A673 (cell line): ENCODE measurements at regions of chr1 and their contacts with region 1.

Region 1: DNA sequence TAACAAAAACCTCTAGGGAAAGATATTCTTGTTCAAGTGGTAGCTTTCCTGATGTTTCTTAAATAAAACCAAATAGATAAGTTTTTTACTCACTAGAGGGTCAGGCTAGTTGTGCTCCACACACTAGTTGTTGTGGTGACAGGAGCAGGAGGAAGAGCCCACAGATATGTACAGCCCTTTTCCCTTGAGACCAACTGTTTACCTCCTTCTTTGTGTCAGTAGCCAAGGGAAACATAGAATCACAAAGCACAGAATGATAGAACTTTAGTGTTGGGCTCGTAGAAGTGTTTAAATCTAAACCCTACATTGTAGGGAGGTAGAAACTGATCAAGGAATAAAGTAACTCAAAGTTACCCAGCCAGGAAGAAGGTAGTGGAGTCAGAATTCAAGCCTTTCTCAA is 309.0 kb downstream of the CTH start:
- DNase-seq: peak; percentile 97
- H3K4me3 ChIP-seq: peak overlapping the region; percentile 14
- H3K27ac ChIP-seq: peak overlapping the region; percentile 99
- H3K4me1 ChIP-seq: peaks cover 42% of the 10 kb centered on the region
- H3K27me3 ChIP-seq: no peaks in the 10 kb centered on the region
- CTCF ChIP-seq: no peak

Region 2: DNA sequence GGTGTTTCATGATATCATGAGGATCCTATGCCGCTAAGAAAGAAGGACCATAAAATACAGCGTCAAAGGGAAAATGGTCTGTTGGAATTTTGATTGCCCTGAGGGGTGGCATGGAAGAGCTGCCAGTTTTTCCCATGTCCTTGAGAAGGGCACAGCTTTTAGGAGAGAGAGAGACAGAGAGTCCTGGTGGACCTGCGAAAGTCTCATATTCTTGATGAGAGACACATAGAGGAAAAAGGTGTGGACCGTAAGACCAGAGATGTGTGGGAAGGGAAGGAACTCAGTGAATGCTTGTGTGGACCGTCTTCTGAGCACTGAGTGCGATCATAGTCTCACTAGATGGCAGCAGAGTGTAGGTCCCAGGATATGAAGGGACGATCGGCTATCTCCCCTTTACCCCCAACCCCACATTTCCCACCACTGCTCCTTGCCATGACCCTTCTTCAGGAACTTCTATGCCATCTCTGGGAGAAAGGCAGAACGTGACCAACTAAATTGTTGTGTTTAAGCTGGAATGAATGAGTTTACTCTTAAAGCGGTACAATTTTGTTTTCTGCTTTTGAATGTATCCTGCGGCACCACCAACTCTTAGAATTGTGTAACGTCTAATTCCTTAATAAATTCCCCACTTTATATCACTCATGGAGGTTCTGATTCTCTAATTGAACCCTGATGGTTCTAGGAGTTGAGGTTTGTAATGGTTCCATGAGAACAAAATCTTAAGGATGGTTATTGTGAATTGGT is 191.3 kb before region 1 on chr1:
- CTCF ChIA-PET with region 1: no interaction called
- POLR2A ChIA-PET with region 1: no interaction called
- intact Hi-C with region 1: loop called (anchors 2 kb)
- DNase-seq: peak; percentile 79
- H3K4me3 ChIP-seq: no peak overlapping the region
- H3K27ac ChIP-seq: peak overlapping the region; percentile 14
- H3K4me1 ChIP-seq: peaks cover 52% of the 10 kb centered on the region
- H3K27me3 ChIP-seq: no peaks in the 10 kb centered on the region
- CTCF ChIP-seq: peak; percentile 83

Region 3: DNA sequence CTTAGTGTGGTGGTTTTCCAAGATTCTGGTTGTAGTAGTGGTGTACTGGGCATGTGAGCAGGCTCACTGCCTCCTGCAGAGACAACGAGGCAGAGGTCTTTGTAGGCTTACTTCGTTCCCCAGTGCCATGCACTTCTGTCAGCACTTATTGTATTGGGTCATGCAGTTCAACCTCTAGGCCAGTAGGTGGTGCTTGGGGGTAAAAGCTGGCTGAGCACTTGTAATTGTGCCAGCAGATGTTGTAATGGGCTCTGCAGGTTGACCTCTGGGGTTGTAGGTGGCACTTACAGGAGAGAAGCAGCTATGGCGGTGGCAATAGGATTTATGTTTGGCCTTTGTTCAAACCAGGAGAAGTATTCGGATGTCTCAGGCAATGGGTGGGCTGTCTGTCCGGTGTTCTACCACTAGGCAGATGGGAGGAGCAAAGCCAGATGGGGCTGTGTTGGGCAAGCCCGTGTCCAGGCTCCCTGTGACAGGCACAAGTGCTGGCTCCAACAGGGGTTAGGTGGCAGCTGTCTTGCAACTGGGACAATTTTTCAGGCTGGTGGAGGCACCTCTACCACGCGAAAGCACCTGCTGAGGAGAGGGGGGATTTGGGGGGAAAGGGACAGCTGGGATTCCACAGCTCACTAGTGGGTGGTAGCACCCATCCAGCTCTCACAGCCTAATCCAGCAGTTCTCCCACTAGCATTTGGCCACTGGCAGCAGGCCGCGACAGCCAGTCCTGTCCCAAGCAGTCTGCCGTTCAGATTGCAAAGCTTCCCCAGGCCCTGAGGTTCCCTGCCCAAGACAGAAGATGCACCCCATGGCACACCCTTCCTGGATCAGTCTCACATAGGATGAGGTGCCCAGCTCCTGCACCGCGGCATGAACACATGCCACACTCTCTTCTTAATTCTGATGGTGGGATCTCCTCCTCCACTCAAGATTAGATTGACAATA is 34.5 kb before region 1 on chr1:
- CTCF ChIA-PET with region 1: no interaction called
- POLR2A ChIA-PET with region 1: no interaction called
- intact Hi-C with region 1: loop called (anchors 1 kb)
- DNase-seq: peak; percentile 84
- H3K4me3 ChIP-seq: no peak overlapping the region
- H3K27ac ChIP-seq: no peak overlapping the region
- H3K4me1 ChIP-seq: peaks cover 7% of the 10 kb centered on the region
- H3K27me3 ChIP-seq: no peaks in the 10 kb centered on the region
- CTCF ChIP-seq: peak; percentile 93

Region 4: GRCh38 chr1:70818401-70818800 is 98.3 kb after region 1 on chr1:
- CTCF ChIA-PET with region 1: no interaction called
- POLR2A ChIA-PET with region 1: no interaction called
- intact Hi-C with region 1: loop called (anchors 2 kb)
- DNase-seq: peak; percentile 92
- H3K4me3 ChIP-seq: no peak overlapping the region
- H3K27ac ChIP-seq: peak overlapping the region; percentile 18
- H3K4me1 ChIP-seq: peaks cover 34% of the 10 kb centered on the region
- H3K27me3 ChIP-seq: no peaks in the 10 kb centered on the region
- CTCF ChIP-seq: no peak

Region 5: GRCh38 chr1:70896224-70896623 is 176.1 kb after region 1 on chr1:
- CTCF ChIA-PET with region 1: no interaction called
- POLR2A ChIA-PET with region 1: no interaction called
- intact Hi-C with region 1: loop called (anchors 5 kb)
- DNase-seq: peak; percentile 59
- H3K4me3 ChIP-seq: no peak overlapping the region
- H3K27ac ChIP-seq: no peak overlapping the region
- H3K4me1 ChIP-seq: peaks cover 30% of the 10 kb centered on the region
- H3K27me3 ChIP-seq: no peaks in the 10 kb centered on the region
- CTCF ChIP-seq: peak; percentile 61